PC-9 (cell line): ENCODE measurements at regions of chr10 and their contacts with region 1.

Region 1: DNA sequence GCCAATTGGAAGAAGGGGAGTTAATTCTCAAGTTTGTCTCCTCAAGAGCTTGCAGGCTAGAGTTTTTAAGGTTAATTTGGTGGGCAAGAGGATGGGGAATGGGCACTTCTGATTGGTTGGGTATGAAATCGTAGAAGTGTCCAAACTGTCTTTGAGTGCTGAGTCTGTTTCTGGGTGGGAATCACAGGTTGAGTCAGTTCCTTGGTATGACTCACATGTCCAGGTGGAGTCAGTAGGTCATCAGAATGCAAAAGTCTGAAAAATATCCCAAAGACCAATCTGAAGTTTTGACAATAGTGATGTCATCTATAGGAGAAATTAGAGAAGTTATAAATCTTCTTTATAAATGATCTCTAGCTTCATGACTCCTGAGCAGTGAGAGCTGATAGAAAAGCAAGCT is 1252.2 kb downstream of the REEP3 start:
- DNase-seq: no peak
- H3K4me3 ChIP-seq: no peak overlapping the region
- H3K27ac ChIP-seq: no peak overlapping the region
- H3K4me1 ChIP-seq: no peaks in the 10 kb centered on the region
- H3K27me3 ChIP-seq: no peaks in the 10 kb centered on the region
- CTCF ChIP-seq: no peak

Region 2: GRCh38 chr10:64648915-64649314 is 124.4 kb before region 1 on chr10:
- CTCF ChIA-PET with region 1: no interaction called
- POLR2A ChIA-PET with region 1: no interaction called
- intact Hi-C with region 1: no loop called
- DNase-seq: no peak
- H3K4me3 ChIP-seq: no peak overlapping the region
- H3K27ac ChIP-seq: no peak overlapping the region
- H3K4me1 ChIP-seq: no peaks in the 10 kb centered on the region
- H3K27me3 ChIP-seq: no peaks in the 10 kb centered on the region
- CTCF ChIP-seq: no peak

Region 3: DNA sequence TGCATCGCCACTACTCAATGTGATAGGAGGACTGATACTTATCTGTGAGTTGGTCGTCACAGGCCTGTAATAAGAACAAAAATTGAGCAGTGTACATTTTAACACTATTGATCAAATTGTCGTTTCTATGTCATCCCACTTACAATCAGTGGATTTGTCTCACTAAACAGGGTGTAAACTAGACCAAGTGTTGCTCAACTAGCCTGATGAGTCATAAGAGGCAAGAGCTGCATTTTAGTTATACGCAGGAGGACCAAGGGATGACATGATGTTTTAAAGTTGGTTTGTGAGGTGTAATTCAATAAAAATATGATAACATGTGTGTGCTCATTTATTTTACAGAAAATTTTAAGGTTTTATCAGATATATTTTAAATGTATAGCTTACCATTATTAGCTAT is 13.0 kb before region 1 on chr10:
- CTCF ChIA-PET with region 1: interaction called, 12 read pairs
- POLR2A ChIA-PET with region 1: no interaction called
- intact Hi-C with region 1: no loop called
- DNase-seq: no peak
- H3K4me3 ChIP-seq: no peak overlapping the region
- H3K27ac ChIP-seq: no peak overlapping the region
- H3K4me1 ChIP-seq: no peaks in the 10 kb centered on the region
- H3K27me3 ChIP-seq: no peaks in the 10 kb centered on the region
- CTCF ChIP-seq: no peak

Region 4: GRCh38 chr10:64786979-64787378 is 13.6 kb after region 1 on chr10:
- CTCF ChIA-PET with region 1: no interaction called
- POLR2A ChIA-PET with region 1: no interaction called
- intact Hi-C with region 1: no loop called
- DNase-seq: no peak
- H3K4me3 ChIP-seq: no peak overlapping the region
- H3K27ac ChIP-seq: no peak overlapping the region
- H3K4me1 ChIP-seq: no peaks in the 10 kb centered on the region
- H3K27me3 ChIP-seq: no peaks in the 10 kb centered on the region
- CTCF ChIP-seq: no peak